ENCODE measurements at regions of chr7 and their contacts with region 1.

Region 1: DNA sequence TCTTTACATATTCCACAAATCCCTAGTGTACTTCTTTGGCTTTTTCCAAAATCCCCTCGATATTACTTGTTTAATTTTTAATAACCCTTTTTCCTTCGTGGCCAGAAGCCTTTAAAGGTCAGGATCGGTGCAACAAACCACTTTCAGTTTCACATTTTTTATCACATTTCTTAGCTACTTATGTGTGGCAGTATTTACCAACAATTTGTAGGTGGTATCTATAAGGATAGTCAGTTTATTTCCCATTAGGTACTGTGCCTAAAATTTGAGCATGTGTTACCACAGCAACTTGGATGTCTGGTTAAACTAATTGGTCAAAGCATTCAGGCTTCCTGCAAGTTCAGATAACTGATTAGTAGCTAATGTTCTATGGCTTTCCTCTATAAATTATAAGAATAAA is 104.9 kb downstream of the CDK14 start:
- DNase-seq: peak; percentile 15
- CTCF ChIP-seq: no peak

Region 2: GRCh38 chr7:90690159-90690858 is 10.7 kb before region 1 on chr7:
- CTCF ChIA-PET with region 1: interaction called, 17 read pairs
- POLR2A ChIA-PET with region 1: no interaction called
- DNase-seq: no peak
- CTCF ChIP-seq: no peak

Measured in GM10248 (cell line).